HEK293T (cell line): ENCODE measurements at regions of chr4 and their contacts with region 1.

Region 1: DNA sequence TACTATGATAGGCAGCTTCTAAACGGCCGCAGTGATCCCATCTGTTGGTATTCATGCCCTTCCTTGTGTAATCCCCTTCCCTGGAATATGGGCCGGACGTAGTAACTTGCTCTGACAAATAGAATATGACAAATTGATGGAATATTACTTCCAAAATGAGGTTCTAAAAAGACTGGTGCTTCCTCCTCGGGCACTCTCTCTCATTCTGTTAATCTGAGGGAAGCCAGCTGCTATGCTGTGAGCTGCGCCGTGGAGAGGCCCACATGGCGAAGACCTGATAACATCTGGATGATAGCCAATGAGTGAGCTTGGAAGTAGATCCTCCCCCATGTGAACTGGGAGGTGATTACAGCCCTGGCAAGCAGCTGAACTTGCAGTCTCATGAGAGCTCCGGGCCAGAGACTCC is 27.2 kb upstream of the SLC25A4 start:
- DNase-seq: peak; percentile 66

Region 2: DNA sequence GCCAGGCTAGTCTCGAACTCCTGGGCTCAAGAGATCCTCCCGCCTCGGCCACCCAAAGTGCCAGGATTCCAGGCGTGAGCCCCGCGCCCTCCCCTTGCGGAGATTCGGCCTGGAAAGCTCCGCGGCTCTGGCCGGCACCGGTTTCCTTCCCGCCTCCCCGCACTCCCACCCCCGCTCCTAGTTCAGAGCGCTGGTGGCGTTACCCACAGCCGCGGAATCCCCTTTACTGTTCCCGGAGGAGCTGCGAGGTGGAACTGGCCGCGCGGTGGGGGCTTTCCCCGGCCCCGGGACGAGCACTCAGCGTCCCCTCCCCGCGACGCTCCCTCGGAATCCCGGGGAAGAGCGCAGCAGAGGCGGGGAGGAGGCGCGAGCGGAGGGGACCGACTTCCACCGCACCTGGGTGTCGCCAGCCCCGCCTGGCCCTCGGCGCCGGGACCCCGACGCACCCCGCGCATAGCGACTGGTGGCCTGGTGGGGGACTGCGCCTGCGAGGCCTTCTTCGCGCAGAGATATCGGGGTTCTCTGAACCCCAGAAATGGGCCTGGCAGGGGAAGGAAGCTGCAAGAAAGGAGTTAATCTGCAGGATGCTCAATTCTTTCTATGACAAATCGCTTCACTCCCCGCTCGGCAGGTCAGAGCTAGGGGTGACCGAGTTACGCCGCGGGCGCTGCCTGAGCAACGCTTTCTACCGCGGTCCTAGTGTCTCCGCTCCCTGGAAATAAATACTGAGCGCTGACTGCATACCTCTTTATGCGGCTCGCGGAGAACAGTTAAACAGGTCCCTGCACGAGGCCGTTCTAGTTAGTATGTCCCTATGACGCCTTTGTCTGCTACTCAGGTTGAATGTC is 12.7 kb after region 1 on chr4:
- CTCF ChIA-PET with region 1: no interaction called
- POLR2A ChIA-PET with region 1: interaction called, 11 read pairs
- DNase-seq: peak; percentile 32

Region 3: DNA sequence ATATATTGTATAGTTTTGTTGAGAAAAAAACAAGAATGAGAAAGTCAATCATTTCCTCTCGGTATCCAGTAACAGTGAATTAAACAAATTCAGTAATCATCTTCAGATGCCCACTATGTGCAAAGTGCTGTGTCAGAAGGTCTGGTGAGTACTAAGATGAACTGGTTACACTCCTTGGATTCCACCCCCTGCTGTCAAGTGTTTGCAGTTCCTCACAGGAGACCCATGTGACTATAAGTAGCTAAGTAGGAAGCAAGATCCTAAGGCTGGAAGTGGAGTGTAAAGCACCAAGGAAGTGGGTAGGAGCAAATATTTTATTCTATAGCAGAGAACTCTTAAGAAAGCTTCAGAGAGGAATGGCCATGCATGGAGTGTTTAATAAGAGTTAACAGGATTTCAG is 167.1 kb after region 1 on chr4:
- CTCF ChIA-PET with region 1: no interaction called
- POLR2A ChIA-PET with region 1: no interaction called
- DNase-seq: no peak